CD4-positive, alpha-beta memory T cell (primary cell): ENCODE measurements at regions of chr14 and their contacts with region 1.

Region 1: GRCh38 chr14:21734457-21735074 is 60.9 kb upstream of the OR4E1 start:
- DNase-seq: peak; percentile 54 to 63 (median 63)
- H3K4me3 ChIP-seq: no peak overlapping the region
- H3K4me3 Mint-ChIP-seq: peak overlapping the region in 7 of 8 donors; percentile 12 to 73 (median 47)
- H3K27ac ChIP-seq: no peak overlapping the region
- H3K27ac Mint-ChIP-seq: peak overlapping the region in 3 of 7 donors; percentile 4 to 77 (median 57)
- H3K4me1 ChIP-seq: no peaks in the 10 kb centered on the region
- H3K4me1 Mint-ChIP-seq: peaks cover 7 to 13% (median 10%) of the 10 kb centered on the region in 4 donors
- H3K27me3 ChIP-seq: no peaks in the 10 kb centered on the region
- H3K27me3 Mint-ChIP-seq: peaks cover 36 to 38% of the 10 kb centered on the region in 2 donors

Region 2: DNA sequence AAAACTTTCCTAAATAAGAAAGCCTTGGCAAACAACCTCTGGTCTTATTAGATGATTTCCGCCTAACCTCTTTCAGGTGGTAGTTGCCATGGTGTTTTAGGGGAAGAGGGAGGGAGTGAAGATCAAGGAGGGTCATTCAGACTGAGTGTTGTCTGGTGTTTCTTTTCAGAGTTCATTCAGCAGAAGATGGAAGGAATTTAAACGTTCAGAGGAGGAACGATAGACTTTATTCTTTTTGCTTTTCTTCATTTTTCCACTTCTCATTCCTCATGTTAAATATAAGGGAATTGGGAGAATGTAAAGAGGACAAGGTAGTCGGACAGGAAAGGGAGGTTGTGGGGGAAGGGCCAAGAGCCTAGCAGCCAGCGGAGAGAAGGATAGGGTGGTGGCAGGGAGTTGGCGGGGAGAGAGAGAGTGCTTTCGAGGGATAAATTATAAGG is 191.0 kb before region 1 on chr14:
- CTCF ChIA-PET with region 1: no interaction called
- POLR2A ChIA-PET with region 1: no interaction called
- intact Hi-C with region 1: no loop called
- DNase-seq: no peak
- H3K4me3 ChIP-seq: no peak overlapping the region
- H3K4me3 Mint-ChIP-seq: no peak overlapping the region
- H3K27ac ChIP-seq: no peak overlapping the region
- H3K27ac Mint-ChIP-seq: no peak overlapping the region
- H3K4me1 ChIP-seq: no peaks in the 10 kb centered on the region
- H3K4me1 Mint-ChIP-seq: peaks cover 0 to 1% (median 0%) of the 10 kb centered on the region in 4 donors
- H3K27me3 ChIP-seq: peaks cover 4% of the 10 kb centered on the region
- H3K27me3 Mint-ChIP-seq: peaks cover 12 to 20% of the 10 kb centered on the region in 2 donors

Region 3: GRCh38 chr14:21711360-21711961 is 23.1 kb before region 1 on chr14:
- CTCF ChIA-PET with region 1: interaction called, 10 read pairs
- POLR2A ChIA-PET with region 1: no interaction called
- intact Hi-C with region 1: no loop called
- DNase-seq: peak in 2 of 5 donors; percentile 35 to 43
- H3K4me3 ChIP-seq: no peak overlapping the region
- H3K4me3 Mint-ChIP-seq: peak overlapping the region in 6 of 8 donors; percentile 7 to 74 (median 60)
- H3K27ac ChIP-seq: peak overlapping the region; percentile 1
- H3K27ac Mint-ChIP-seq: peak overlapping the region in 4 of 7 donors; percentile 56 to 84 (median 80)
- H3K4me1 ChIP-seq: no peaks in the 10 kb centered on the region
- H3K4me1 Mint-ChIP-seq: peaks cover 0 to 15% (median 3%) of the 10 kb centered on the region in 4 donors
- H3K27me3 ChIP-seq: no peaks in the 10 kb centered on the region
- H3K27me3 Mint-ChIP-seq: peaks cover 12 to 23% of the 10 kb centered on the region in 2 donors

Region 4: GRCh38 chr14:21723431-21724045 is 11.0 kb before region 1 on chr14:
- CTCF ChIA-PET with region 1: interaction called, 25 read pairs
- POLR2A ChIA-PET with region 1: interaction called, 9 read pairs
- intact Hi-C with region 1: no loop called
- DNase-seq: peak in 3 of 5 donors; percentile 37 to 62 (median 39)
- H3K4me3 ChIP-seq: no peak overlapping the region
- H3K4me3 Mint-ChIP-seq: peak overlapping the region; percentile 56 to 83 (median 78)
- H3K27ac ChIP-seq: peak overlapping the region; percentile 22
- H3K27ac Mint-ChIP-seq: peak overlapping the region; percentile 4 to 90 (median 58)
- H3K4me1 ChIP-seq: no peaks in the 10 kb centered on the region
- H3K4me1 Mint-ChIP-seq: peaks cover 0 to 9% (median 0%) of the 10 kb centered on the region in 4 donors
- H3K27me3 ChIP-seq: no peaks in the 10 kb centered on the region
- H3K27me3 Mint-ChIP-seq: peaks cover 15 to 16% of the 10 kb centered on the region in 2 donors

Region 5: DNA sequence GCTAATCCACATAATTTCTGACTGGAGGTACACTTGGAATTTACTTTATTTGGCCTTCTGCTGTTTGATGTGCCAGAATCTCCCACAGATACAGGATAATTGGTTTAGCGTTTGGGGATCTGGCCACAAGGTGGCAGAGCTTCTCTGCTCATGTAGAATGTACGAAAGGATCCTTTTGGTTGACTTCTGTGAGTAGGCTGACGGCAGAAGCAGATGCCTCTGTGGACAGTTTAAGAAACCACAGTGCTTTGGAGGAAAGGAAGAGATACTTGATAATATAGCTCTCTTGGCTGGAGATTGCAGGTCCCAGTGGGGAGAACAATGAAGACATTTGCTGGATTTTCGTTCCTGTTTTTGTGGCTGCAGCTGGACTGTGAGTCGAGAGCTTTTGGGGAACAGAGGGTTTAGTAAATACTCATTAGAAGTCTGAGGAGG is 14.3 kb after region 1 on chr14:
- CTCF ChIA-PET with region 1: interaction called, 9 read pairs
- POLR2A ChIA-PET with region 1: interaction called, 11 read pairs
- intact Hi-C with region 1: no loop called
- DNase-seq: peak; percentile 48 to 54 (median 50)
- H3K4me3 ChIP-seq: no peak overlapping the region
- H3K4me3 Mint-ChIP-seq: peak overlapping the region; percentile 18 to 78 (median 62)
- H3K27ac ChIP-seq: no peak overlapping the region
- H3K27ac Mint-ChIP-seq: peak overlapping the region in 6 of 7 donors; percentile 26 to 82 (median 50)
- H3K4me1 ChIP-seq: no peaks in the 10 kb centered on the region
- H3K4me1 Mint-ChIP-seq: peaks cover 6 to 9% (median 8%) of the 10 kb centered on the region in 4 donors
- H3K27me3 ChIP-seq: no peaks in the 10 kb centered on the region
- H3K27me3 Mint-ChIP-seq: peaks cover 12 to 19% of the 10 kb centered on the region in 2 donors